SK-N-SH (cell line): ENCODE measurements at regions of chr9 and their contacts with region 1.

Region 1: DNA sequence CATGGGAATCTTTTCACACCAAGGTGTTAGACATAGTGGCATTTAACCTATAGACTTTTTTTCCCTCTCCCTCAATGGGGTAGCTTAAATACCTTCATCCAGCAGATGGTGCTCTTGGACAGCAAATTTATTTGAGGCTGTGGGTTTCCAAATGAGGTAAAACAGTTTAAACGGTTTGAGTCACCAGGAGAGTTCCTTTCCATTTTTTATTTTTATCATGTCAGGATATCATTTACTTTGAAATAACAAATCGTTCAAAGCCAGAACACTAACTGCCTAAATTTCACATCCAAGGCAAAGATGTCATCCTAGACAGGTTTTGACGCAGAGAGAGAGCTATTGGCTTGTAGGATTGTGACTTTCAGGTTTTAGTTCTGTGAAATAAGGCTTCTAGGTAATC is 69.7 kb downstream of the KDM4C start:
- DNase-seq: peak; percentile 67
- H3K4me3 ChIP-seq: no peak overlapping the region; a peak in 1 of 4 replicates
- H3K27ac ChIP-seq: no peak overlapping the region
- H3K4me1 ChIP-seq: peaks cover 0 to 9% of the 10 kb centered on the region in 2 experiments; a peak in 2 of 4 replicates
- H3K27me3 ChIP-seq: no peaks in the 10 kb centered on the region
- CTCF ChIP-seq: peak; percentile 79
- EP300 ChIP-seq: no peak
- RAD21 ChIP-seq: peak; percentile 90

Region 2: GRCh38 chr9:6811436-6811835 is 16.0 kb before region 1 on chr9:
- CTCF ChIA-PET with region 1: interaction called, 27 read pairs
- POLR2A ChIA-PET with region 1: no interaction called
- DNase-seq: peak; percentile 47
- H3K4me3 ChIP-seq: no peak overlapping the region
- H3K27ac ChIP-seq: peak overlapping the region in 1 of 2 experiments; percentile 82; a peak in 2 of 4 replicates
- H3K4me1 ChIP-seq: peaks cover 0 to 3% of the 10 kb centered on the region in 2 experiments; a peak in 2 of 4 replicates
- H3K27me3 ChIP-seq: no peaks in the 10 kb centered on the region
- CTCF ChIP-seq: no peak
- EP300 ChIP-seq: no peak
- RAD21 ChIP-seq: no peak

Region 3: GRCh38 chr9:6838158-6838557 is 10.7 kb after region 1 on chr9:
- CTCF ChIA-PET with region 1: interaction called, 15 read pairs
- POLR2A ChIA-PET with region 1: no interaction called
- DNase-seq: peak; percentile 18
- H3K4me3 ChIP-seq: no peak overlapping the region
- H3K27ac ChIP-seq: no peak overlapping the region
- H3K4me1 ChIP-seq: peaks cover 0 to 2% of the 10 kb centered on the region in 2 experiments; a peak in 1 of 4 replicates
- H3K27me3 ChIP-seq: no peaks in the 10 kb centered on the region
- CTCF ChIP-seq: no peak
- EP300 ChIP-seq: no peak
- RAD21 ChIP-seq: no peak

Region 4: GRCh38 chr9:6845880-6846279 is 18.4 kb after region 1 on chr9:
- CTCF ChIA-PET with region 1: interaction called, 10 read pairs
- POLR2A ChIA-PET with region 1: no interaction called
- DNase-seq: peak; percentile 39
- H3K4me3 ChIP-seq: no peak overlapping the region
- H3K27ac ChIP-seq: no peak overlapping the region
- H3K4me1 ChIP-seq: no peaks in the 10 kb centered on the region
- H3K27me3 ChIP-seq: no peaks in the 10 kb centered on the region
- CTCF ChIP-seq: peak; percentile 52
- EP300 ChIP-seq: no peak
- RAD21 ChIP-seq: peak; percentile 56

Region 5: DNA sequence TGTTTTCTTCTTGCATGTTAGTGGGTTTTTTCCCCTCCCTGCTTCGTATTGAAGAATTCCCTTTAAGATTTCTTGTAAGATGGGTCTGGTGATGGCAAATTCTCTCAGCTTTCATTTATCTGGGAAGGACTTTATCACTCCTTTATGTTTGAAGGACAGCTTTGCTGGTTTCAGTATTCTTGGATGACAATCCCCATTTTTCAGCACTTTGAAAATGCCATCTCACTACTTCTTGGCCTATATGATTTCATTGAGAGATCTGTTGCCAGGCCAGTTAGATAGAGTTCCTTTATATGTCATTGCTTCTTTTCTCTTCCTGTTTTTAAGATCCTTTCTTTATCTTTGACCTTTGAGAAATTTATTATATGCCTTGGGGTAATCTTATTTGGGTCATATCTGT is 36.7 kb after region 1 on chr9:
- CTCF ChIA-PET with region 1: interaction called, 11 read pairs
- POLR2A ChIA-PET with region 1: no interaction called
- DNase-seq: no peak
- H3K4me3 ChIP-seq: no peak overlapping the region
- H3K27ac ChIP-seq: no peak overlapping the region
- H3K4me1 ChIP-seq: peaks cover 0 to 10% of the 10 kb centered on the region in 2 experiments; a peak in 2 of 4 replicates
- H3K27me3 ChIP-seq: no peaks in the 10 kb centered on the region
- CTCF ChIP-seq: no peak
- EP300 ChIP-seq: no peak
- RAD21 ChIP-seq: no peak

Region 6: GRCh38 chr9:6907772-6908381 is 80.4 kb after region 1 on chr9:
- CTCF ChIA-PET with region 1: interaction called, 17 read pairs
- POLR2A ChIA-PET with region 1: no interaction called
- DNase-seq: no peak
- H3K4me3 ChIP-seq: no peak overlapping the region; a peak in 1 of 4 replicates
- H3K27ac ChIP-seq: no peak overlapping the region
- H3K4me1 ChIP-seq: peaks cover under 1 to 15% of the 10 kb centered on the region in 2 experiments; a peak in 2 of 4 replicates
- H3K27me3 ChIP-seq: no peaks in the 10 kb centered on the region
- CTCF ChIP-seq: peak; percentile 91
- EP300 ChIP-seq: no peak
- RAD21 ChIP-seq: peak; percentile 88

Region 7: DNA sequence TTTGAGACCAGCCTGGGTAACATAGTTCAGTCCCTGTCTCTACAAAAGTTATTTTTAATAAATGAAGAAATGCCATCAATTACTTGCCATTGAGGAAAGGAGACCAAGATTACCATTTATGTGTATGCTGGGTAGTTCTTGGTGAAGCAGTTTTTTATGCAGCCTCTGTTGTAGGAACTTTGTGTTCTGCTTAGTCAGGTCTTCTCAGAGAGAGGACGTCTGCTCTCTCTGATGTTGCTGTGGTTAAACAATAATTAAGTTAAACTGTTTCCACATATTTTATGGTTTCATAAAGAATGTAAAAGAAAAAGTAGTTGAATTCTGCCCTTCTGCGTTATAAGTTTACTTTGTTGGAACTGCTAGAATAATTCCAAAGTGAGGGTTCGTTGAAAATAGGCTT is 140.8 kb after region 1 on chr9:
- CTCF ChIA-PET with region 1: no interaction called
- POLR2A ChIA-PET with region 1: no interaction called
- DNase-seq: no peak
- H3K4me3 ChIP-seq: no peak overlapping the region
- H3K27ac ChIP-seq: no peak overlapping the region
- H3K4me1 ChIP-seq: peaks cover 0 to 3% of the 10 kb centered on the region in 2 experiments; a peak in 3 of 4 replicates
- H3K27me3 ChIP-seq: no peaks in the 10 kb centered on the region
- CTCF ChIP-seq: no peak
- EP300 ChIP-seq: no peak
- RAD21 ChIP-seq: no peak

Region 8: DNA sequence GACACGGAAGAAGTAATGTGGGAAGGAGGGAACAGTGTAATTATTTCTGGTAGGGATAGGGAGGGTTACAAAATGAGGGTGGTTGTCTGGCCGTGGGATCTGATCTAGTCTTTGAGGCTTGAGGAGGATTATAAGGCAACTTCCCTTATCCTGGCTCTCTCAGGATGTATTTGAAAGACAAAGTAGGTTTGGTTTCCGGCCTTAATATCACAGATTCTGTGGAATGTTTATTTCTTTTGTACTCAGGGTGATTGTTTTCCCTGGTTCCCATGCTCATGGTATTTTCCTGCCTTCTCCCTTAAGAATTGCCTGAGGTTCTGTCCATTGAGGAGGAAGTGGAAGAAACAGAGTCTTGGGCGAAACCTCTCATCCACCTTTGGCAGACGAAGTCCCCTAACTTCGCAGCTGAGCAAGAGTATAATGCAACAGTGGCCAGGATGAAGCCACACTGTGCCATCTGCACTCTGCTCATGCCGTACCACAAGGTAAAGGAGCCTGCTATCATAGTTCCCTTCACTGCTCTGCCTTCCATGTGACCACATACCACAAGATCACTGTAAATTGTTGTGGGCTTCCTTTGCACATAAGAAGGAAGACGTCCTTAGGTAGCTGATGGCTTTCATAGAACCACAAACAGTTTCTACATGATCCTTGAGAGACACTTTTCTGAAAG is 184.1 kb after region 1 on chr9:
- CTCF ChIA-PET with region 1: no interaction called
- POLR2A ChIA-PET with region 1: no interaction called
- DNase-seq: no peak
- H3K4me3 ChIP-seq: no peak overlapping the region
- H3K27ac ChIP-seq: no peak overlapping the region
- H3K4me1 ChIP-seq: no peaks in the 10 kb centered on the region
- H3K27me3 ChIP-seq: no peaks in the 10 kb centered on the region
- CTCF ChIP-seq: no peak
- EP300 ChIP-seq: no peak
- RAD21 ChIP-seq: no peak